ENCODE measurements at regions of chr17 and their contacts with region 1.

Region 1: DNA sequence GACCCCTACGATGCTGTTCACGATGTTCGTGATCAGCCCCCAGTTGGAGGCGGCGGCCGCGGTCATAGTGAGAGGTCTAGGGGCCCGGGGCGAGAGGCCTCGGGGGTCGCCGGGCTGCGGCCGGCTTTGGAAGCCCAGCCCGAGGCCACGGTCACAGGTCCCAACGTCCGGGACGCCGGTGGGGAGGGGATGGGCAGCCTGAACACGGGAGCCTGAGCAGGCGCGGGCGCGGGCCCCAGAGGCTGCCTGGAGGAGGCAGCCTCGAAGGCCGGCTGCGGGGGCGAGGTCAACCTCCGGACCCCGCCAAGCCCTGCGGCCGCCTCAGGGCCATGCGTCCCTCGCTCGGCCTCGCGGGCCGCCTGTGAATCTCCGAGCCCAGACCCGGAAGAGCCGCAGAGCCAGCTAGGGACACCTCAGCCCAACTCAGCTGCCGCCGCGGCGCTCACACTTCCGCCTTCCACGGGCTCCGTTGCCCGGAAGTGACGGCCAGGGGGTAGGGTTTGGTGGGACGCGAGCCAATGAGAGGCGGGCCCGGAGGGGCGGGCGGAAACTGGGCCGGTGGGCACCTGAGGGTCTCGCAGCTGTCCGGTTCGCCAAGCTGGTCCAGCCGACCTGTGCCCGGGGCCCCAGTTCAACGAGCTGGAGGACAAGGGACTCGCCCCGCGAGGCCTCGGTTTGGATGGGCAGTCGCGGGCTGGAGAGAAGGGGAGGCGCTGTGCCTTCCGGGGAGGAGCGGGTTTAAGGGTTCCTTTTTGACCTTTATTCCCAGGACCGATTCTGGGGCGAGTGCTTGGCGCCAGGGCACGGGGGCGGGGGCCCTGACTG is at the start of gene SLC38A10:
- DNase-seq: peak; percentile 82 to 94 (median 90)
- ATAC-seq: peak; percentile 79
- H3K4me3 ChIP-seq: peak within 1 kb of the TSS; percentile 94
- H3K4me3 Mint-ChIP-seq: peak within 1 kb of the TSS; percentile 100
- H3K27ac ChIP-seq: peak within 1 kb of the TSS; percentile 85 to 94
- H3K27ac Mint-ChIP-seq: peak within 1 kb of the TSS; percentile 100
- H3K4me1 ChIP-seq: peaks cover 50% of the 10 kb centered on the region
- H3K4me1 Mint-ChIP-seq: peaks cover 44% of the 10 kb centered on the region
- H3K27me3 ChIP-seq: no peaks in the 10 kb centered on the region
- H3K27me3 Mint-ChIP-seq: no peaks in the 10 kb centered on the region
- CTCF ChIP-seq: no peak
- total RNA-seq, gene SLC38A10: 22.8 to 26.4 TPM

Region 2: GRCh38 chr17:81222906-81223761 is 71.9 kb before region 1 on chr17 and contains the start of gene CEP131:
- CTCF ChIA-PET with region 1: no interaction called
- POLR2A ChIA-PET with region 1: no interaction called
- intact Hi-C with region 1: loop called in 1 of 2 experiments (anchors 2 kb)
- DNase-seq: peak; percentile 97 to 100 (median 100)
- ATAC-seq: peak; percentile 95
- H3K4me3 ChIP-seq: peak within 1 kb of the TSS; percentile 65
- H3K4me3 Mint-ChIP-seq: peak within 1 kb of the TSS; percentile 87
- H3K27ac ChIP-seq: no peak within 1 kb of the TSS
- H3K27ac Mint-ChIP-seq: no peak within 1 kb of the TSS
- H3K4me1 ChIP-seq: peaks cover 25% of the 10 kb centered on the region
- H3K4me1 Mint-ChIP-seq: peaks cover 23% of the 10 kb centered on the region
- H3K27me3 ChIP-seq: no peaks in the 10 kb centered on the region
- H3K27me3 Mint-ChIP-seq: no peaks in the 10 kb centered on the region
- CTCF ChIP-seq: no peak
- total RNA-seq, gene CEP131: 11.2 to 12.3 TPM

Region 3: DNA sequence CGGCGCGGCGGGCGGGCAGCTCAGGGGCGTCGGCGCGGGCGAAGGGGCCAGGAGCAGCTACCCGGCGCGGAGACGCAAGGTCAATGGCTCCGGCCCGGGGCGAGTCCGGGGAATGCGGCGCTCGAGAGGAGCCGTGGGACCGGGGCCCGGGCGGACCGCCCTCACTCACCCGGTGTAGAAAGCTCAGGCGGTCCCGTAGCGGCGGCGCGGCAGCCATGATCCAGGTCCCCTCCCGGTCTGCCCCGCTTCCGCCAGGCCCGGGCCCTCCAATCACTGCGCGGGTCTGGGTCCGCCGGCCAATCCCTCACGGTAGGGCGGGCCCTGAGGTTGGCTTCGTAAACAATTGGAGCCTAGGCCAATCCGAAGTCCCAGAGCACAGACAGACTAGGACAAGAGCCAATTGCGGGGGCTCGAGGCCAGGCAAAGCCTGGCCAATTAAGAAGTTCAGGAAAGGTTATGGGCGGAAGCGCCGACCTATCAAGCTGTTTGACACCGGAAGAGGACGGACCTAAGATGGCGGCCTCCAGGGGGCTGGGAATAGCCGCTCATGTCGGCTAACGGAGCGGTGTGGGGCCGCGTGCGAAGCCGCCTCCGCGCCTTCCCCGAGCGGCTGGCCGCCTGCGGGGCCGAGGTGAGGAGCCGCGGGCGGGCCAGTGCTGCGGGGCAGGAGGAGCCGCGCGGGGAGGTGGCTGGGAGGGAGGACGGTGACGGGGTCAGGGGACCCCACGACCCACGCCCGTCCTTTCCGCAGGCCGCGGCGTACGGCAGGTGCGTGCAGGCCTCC is 56.1 kb before region 1 on chr17 and contains the starts of genes NDUFAF8 and TEPSIN:
- CTCF ChIA-PET with region 1: interaction called, 6 read pairs
- POLR2A ChIA-PET with region 1: interaction called, 22 read pairs
- intact Hi-C with region 1: loop called in 1 of 2 experiments (anchors 1 kb)
- DNase-seq: peak; percentile 89 to 99 (median 93)
- ATAC-seq: peak; percentile 95
- H3K4me3 ChIP-seq: peak within 1 kb of the TSS; percentile 90
- H3K4me3 Mint-ChIP-seq: peak within 1 kb of the TSS; percentile 98
- H3K27ac ChIP-seq: peak within 1 kb of the TSS in 1 of 2 donors; percentile 47
- H3K27ac Mint-ChIP-seq: peak within 1 kb of the TSS; percentile 92
- H3K4me1 ChIP-seq: peaks cover 58% of the 10 kb centered on the region
- H3K4me1 Mint-ChIP-seq: peaks cover 43% of the 10 kb centered on the region
- H3K27me3 ChIP-seq: no peaks in the 10 kb centered on the region
- H3K27me3 Mint-ChIP-seq: no peaks in the 10 kb centered on the region
- CTCF ChIP-seq: no peak
- total RNA-seq, gene NDUFAF8: 34.6 to 38.6 TPM
- total RNA-seq, gene TEPSIN: 68.2 to 74.4 TPM

Region 4: DNA sequence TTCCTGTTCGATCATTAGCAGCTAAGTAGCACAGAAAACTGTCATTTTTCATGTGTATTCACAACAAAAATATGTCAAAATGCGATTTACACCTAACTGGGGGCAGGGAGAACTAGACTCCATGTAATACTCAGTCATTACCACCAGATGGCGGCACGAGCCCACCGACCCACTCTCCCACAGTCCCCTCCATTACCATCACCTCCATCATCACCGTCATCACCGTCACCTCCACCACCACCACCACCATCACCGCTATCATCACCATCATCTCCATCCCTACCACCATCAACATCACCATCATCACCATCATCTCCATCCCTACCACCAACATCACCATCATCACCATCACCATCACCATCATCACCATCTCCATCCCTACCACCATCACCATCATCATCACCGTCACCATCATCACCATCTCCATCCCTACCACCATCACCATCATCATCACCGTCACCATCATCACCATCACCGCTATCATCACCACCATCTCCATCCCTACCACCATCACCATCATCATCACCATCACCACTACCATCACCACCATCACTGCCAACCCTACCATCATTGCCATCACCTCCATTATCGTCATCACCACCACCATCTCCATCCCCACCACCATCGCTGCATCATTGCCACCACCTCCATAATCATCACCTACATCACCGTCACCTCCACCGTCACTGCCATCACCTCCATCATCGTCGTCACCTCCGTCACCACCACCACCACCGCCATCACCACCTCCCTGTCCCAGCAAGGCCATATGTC is 41.5 kb before region 1 on chr17:
- CTCF ChIA-PET with region 1: no interaction called
- POLR2A ChIA-PET with region 1: no interaction called
- intact Hi-C with region 1: loop called (anchors 2 to 5 kb)
- DNase-seq: peak; percentile 47 to 83 (median 58)
- ATAC-seq: peak; percentile 96
- H3K4me3 ChIP-seq: no peak overlapping the region
- H3K4me3 Mint-ChIP-seq: no peak overlapping the region
- H3K27ac ChIP-seq: no peak overlapping the region
- H3K27ac Mint-ChIP-seq: no peak overlapping the region
- H3K4me1 ChIP-seq: no peaks in the 10 kb centered on the region
- H3K4me1 Mint-ChIP-seq: peaks cover 11% of the 10 kb centered on the region
- H3K27me3 ChIP-seq: no peaks in the 10 kb centered on the region
- H3K27me3 Mint-ChIP-seq: no peaks in the 10 kb centered on the region
- CTCF ChIP-seq: peak; percentile 80

Region 5: GRCh38 chr17:81346090-81346907 is 51.2 kb after region 1 on chr17:
- CTCF ChIA-PET with region 1: no interaction called
- POLR2A ChIA-PET with region 1: interaction called, 3 read pairs
- intact Hi-C with region 1: loop called in 1 of 2 experiments (anchors 2 kb)
- DNase-seq: peak; percentile 85 to 97 (median 93)
- ATAC-seq: peak; percentile 95
- H3K4me3 ChIP-seq: peak overlapping the region; percentile 54
- H3K4me3 Mint-ChIP-seq: peak overlapping the region; percentile 58
- H3K27ac ChIP-seq: no peak overlapping the region
- H3K27ac Mint-ChIP-seq: no peak overlapping the region
- H3K4me1 ChIP-seq: peaks cover 51% of the 10 kb centered on the region
- H3K4me1 Mint-ChIP-seq: peaks cover 20% of the 10 kb centered on the region
- H3K27me3 ChIP-seq: peaks cover 35 to 39% of the 10 kb centered on the region in 2 experiments
- H3K27me3 Mint-ChIP-seq: peaks cover 33% of the 10 kb centered on the region
- CTCF ChIP-seq: no peak

Region 6: DNA sequence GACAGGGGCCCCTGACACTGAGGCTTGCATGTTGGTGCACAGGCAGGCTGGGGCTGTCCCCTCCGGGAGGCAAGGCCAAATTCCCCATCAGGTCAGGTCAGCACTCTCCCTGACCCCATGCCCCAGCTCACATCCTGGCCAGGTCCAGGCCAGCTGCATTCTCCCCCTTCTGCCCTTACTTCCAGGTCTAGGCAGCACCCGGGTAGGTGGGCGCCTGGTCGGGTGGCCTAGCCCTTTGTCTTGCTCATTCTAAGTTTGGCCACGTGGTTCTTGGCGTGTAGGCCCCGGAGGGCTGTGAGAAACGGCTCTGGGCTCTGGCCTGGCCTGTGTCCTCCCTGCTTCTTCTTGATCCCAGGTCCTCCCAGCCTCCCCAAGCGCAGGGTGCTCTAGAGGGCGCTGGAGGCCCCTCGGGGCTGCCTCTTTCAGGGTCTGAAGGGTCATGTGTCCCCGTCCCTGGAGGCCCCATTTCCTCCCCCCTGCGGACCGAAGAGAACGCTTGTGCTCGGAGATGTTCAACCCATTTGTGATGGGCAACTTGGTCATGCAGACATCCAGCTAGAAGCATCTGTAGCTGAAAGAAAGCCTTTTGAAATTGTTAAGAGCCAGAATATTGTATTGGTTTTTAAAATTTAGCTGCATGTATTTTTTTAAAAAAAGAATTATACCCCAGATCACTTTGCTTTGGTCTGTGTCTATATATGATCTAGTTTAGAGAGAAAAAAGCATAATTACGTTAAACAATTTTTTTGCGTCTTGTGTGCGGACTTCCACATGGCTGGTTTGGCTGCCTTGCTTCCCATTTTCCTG is 106.9 kb after region 1 on chr17:
- CTCF ChIA-PET with region 1: interaction called, 3 read pairs
- POLR2A ChIA-PET with region 1: no interaction called
- intact Hi-C with region 1: loop called in 1 of 2 experiments (anchors 5 kb)
- DNase-seq: no peak
- ATAC-seq: no peak
- H3K4me3 ChIP-seq: no peak overlapping the region
- H3K4me3 Mint-ChIP-seq: peak overlapping the region; percentile 62
- H3K27ac ChIP-seq: no peak overlapping the region
- H3K27ac Mint-ChIP-seq: no peak overlapping the region
- H3K4me1 ChIP-seq: peaks cover 28% of the 10 kb centered on the region
- H3K4me1 Mint-ChIP-seq: peaks cover 17% of the 10 kb centered on the region
- H3K27me3 ChIP-seq: peaks cover 60 to 80% of the 10 kb centered on the region in 2 experiments
- H3K27me3 Mint-ChIP-seq: peaks cover 75% of the 10 kb centered on the region
- CTCF ChIP-seq: no peak

Region 7: DNA sequence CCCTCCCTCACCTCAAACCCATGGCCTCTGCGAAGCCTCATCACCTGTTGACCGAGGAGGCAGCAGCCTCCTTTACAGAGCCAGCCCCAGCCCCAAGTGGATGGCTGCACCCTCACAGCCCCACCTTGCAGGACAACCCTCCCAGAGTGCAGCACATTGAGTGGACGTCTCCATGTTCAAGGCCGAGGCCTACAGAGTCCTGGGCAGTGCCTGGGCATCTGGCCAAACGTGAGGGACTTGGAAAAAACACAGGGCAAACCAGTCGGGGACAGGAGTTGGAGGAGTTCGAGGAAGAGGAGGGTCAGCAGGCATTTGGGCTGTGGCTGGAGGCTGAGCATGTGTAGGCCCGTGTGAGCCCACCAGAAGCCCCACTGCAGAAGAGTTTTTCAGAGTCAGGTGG is 178.0 kb after region 1 on chr17:
- CTCF ChIA-PET with region 1: no interaction called
- POLR2A ChIA-PET with region 1: no interaction called
- intact Hi-C with region 1: no loop called
- DNase-seq: no peak
- ATAC-seq: no peak
- H3K4me3 ChIP-seq: no peak overlapping the region
- H3K4me3 Mint-ChIP-seq: no peak overlapping the region
- H3K27ac ChIP-seq: no peak overlapping the region
- H3K27ac Mint-ChIP-seq: no peak overlapping the region
- H3K4me1 ChIP-seq: no peaks in the 10 kb centered on the region
- H3K4me1 Mint-ChIP-seq: no peaks in the 10 kb centered on the region
- H3K27me3 ChIP-seq: no peaks in the 10 kb centered on the region
- H3K27me3 Mint-ChIP-seq: peaks cover 3% of the 10 kb centered on the region
- CTCF ChIP-seq: no peak

Region 8: GRCh38 chr17:81512560-81513371 is 217.7 kb after region 1 on chr17 and contains the start of gene ACTG1:
- CTCF ChIA-PET with region 1: interaction called, 4 read pairs
- POLR2A ChIA-PET with region 1: interaction called, 12 read pairs
- intact Hi-C with region 1: loop called in 1 of 2 experiments (anchors 10 kb)
- DNase-seq: peak; percentile 84 to 96 (median 92)
- ATAC-seq: peak; percentile 66
- H3K4me3 ChIP-seq: peak within 1 kb of the TSS; percentile 98
- H3K4me3 Mint-ChIP-seq: peak within 1 kb of the TSS; percentile 99
- H3K27ac ChIP-seq: peak within 1 kb of the TSS; percentile 72 to 87
- H3K27ac Mint-ChIP-seq: peak within 1 kb of the TSS; percentile 90
- H3K4me1 ChIP-seq: peaks cover 72% of the 10 kb centered on the region
- H3K4me1 Mint-ChIP-seq: peaks cover 57% of the 10 kb centered on the region
- H3K27me3 ChIP-seq: no peaks in the 10 kb centered on the region
- H3K27me3 Mint-ChIP-seq: no peaks in the 10 kb centered on the region
- CTCF ChIP-seq: no peak
- total RNA-seq, gene ACTG1: 1,296 to 1,318 TPM

Region 9: DNA sequence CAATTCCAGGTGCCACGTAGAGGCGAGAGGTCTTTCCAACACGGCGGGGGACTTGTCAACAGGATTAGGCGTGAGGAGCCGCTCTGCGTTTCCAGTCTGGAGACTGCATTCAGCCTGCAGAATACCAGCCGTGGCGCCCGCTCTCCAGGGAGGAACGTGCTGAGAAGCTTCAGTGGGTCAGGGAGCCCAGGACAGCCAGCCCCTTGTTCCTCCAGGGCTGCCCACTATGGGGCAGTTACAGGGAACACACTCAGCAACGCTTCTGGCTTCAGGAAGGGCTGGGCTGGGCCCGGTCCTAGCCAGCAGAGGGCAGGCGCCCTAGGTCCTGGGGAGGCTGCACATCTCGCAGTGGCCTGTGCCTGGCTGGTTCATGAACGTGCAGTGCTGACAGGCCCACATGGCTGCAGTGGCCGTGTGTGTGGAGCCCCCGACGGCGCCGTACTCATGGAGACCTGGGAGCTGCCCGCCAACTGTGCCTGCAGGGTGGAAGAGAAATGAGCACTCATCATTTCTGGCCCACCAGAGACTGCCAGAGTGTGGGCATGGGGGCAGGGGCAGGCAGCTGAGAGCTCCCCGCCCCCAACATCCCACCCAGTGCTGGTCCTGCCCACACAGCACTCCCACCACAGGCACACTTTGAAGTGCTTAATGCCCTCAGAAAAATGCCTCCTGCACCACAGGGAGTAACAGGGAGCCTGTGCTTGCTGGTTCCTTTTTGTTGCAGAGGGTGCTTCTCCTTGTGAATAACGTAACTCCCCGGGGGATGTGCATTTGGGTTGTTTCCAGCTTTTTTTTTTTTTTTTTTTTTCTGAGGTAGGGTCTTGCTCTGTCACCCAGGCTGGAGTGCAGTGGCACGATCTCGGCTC is 264.1 kb after region 1 on chr17:
- CTCF ChIA-PET with region 1: no interaction called
- POLR2A ChIA-PET with region 1: no interaction called
- intact Hi-C with region 1: no loop called
- DNase-seq: peak in 1 of 14 experiments; percentile 19
- ATAC-seq: no peak
- H3K4me3 ChIP-seq: no peak overlapping the region
- H3K4me3 Mint-ChIP-seq: no peak overlapping the region
- H3K27ac ChIP-seq: no peak overlapping the region
- H3K27ac Mint-ChIP-seq: no peak overlapping the region
- H3K4me1 ChIP-seq: peaks cover 4% of the 10 kb centered on the region
- H3K4me1 Mint-ChIP-seq: peaks cover 3% of the 10 kb centered on the region
- H3K27me3 ChIP-seq: no peaks in the 10 kb centered on the region
- H3K27me3 Mint-ChIP-seq: no peaks in the 10 kb centered on the region
- CTCF ChIP-seq: no peak

Measured in CD4-positive, alpha-beta T cell (primary cell).